Activated CD4-positive, alpha-beta T cell treated with anti-CD3 and anti-CD28 coated beads, Interleukin-2, amount 10 ng/mL, durations not matched to agents 24 days and 14 days (primary cell): ENCODE measurements at regions of chr10 and their contacts with region 1.

Region 1: GRCh38 chr10:94320285-94320914 is 42.3 kb downstream of the NOC3L start:
- DNase-seq: peak; percentile 88
- H3K4me3 Mint-ChIP-seq: no peak overlapping the region
- H3K27ac Mint-ChIP-seq: no peak overlapping the region
- H3K4me1 Mint-ChIP-seq: peaks cover 2% of the 10 kb centered on the region
- H3K27me3 Mint-ChIP-seq: no peaks in the 10 kb centered on the region

Region 2: DNA sequence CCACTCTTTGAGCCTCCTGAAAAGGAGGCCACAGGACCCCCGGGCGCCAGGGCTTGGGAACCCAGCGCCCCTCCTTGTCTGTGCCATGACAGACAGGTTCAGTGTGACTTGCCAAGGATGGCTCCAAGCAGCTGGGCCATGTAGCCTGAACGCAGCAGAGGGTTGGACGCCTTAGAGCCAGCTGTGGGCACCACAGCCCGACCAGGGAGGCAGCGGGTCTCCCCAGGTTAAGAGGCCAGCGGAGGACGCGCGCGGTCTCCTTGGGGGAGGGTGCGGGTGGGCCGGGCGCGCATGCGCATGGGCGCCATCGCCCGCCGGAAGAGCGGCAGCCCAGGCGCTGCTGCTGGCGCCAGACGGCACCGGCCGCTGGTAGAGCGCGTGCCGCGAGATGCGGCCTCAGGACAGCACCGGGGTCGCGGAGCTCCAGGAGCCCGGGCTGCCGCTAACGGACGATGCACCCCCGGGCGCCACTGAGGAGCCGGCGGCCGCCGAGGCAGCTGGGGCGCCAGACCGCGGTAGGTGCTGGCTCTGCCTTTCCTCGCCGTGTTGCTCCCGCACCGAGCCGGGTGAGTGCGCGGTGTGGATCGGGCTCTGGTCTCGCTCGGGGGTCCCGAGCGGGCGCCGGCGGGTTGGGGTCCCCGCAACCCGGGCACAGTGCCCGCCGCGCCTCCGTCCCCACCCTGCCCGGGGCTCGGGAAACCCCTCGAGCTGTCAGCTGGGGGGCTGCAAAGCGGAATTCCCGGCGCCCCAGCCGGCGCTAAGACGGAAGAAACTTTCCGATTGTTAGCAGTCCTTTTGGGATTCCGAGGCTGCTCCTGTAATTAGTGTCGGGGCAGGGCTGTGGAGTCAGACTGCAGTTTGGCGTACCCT is 426.5 kb before region 1 on chr10 and contains the start of gene SLC35G1:
- intact Hi-C with region 1: loop called (anchors 10 kb)
- DNase-seq: peak; percentile 88
- H3K4me3 Mint-ChIP-seq: peak within 1 kb of the TSS; percentile 86
- H3K27ac Mint-ChIP-seq: peak within 1 kb of the TSS; percentile 64
- H3K4me1 Mint-ChIP-seq: peaks cover 34% of the 10 kb centered on the region
- H3K27me3 Mint-ChIP-seq: peaks cover 9% of the 10 kb centered on the region
- total RNA-seq, gene SLC35G1: 6.3 and 6.4 TPM in 2 replicates

Region 3: DNA sequence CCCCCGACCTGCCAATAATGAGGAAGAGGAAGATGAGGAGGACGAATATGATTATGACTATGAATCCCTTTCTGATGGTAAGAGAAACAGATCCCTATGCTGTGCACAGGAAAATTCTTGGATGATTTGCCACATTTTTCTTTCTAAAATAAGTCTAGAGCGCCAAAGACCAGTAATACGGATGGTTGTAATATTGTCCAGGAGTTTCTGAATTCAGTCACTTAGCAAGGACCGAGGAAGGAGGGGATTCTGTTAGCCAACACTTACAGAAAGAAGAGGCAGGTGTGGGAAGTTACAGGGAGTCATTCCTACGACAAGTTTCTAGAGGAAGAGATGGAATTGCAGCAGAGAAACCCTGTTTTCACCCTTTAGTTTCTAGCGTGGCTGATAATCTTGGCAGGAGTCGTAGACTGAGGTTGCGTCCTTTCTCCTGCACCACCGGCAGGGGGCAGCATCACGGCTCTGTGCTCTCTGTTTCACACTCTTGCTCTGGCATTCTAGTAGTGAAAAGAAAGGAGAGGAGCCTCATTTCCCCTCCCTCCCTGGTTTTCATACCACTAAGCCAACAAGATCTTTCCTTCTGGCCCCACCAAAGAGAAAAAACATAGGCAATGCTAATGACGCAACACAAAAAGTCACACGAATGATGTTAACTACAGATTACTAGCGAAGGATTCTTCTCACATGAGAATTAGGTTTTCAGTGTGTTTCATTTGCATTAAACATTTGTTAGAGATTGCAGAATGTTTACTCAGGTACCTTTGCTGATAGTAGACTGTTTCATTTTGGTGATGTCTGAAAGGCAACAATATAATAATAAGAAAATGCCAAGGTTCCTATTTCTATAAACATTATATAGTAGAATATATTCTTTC is 40.3 kb before region 1 on chr10:
- intact Hi-C with region 1: loop called (anchors 1 kb)
- DNase-seq: peak; percentile 86
- H3K4me3 Mint-ChIP-seq: no peak overlapping the region
- H3K27ac Mint-ChIP-seq: no peak overlapping the region
- H3K4me1 Mint-ChIP-seq: peaks cover 2% of the 10 kb centered on the region
- H3K27me3 Mint-ChIP-seq: peaks cover 23% of the 10 kb centered on the region

Region 4: GRCh38 chr10:94308866-94309265 is 11.5 kb before region 1 on chr10:
- intact Hi-C with region 1: no loop called
- DNase-seq: no peak
- H3K4me3 Mint-ChIP-seq: no peak overlapping the region
- H3K27ac Mint-ChIP-seq: no peak overlapping the region
- H3K4me1 Mint-ChIP-seq: no peaks in the 10 kb centered on the region
- H3K27me3 Mint-ChIP-seq: peaks cover 22% of the 10 kb centered on the region